ENCODE measurements at regions of chr21 and their contacts with region 1.

Region 1: GRCh38 chr21:41879190-41879998 is at the start of gene PRDM15:
- DNase-seq: peak; percentile 92
- ATAC-seq: peak; percentile 79
- H3K4me3 Mint-ChIP-seq: peak within 1 kb of the TSS; percentile 79
- H3K27ac Mint-ChIP-seq: peak within 1 kb of the TSS; percentile 97
- H3K4me1 Mint-ChIP-seq: peaks cover 18% of the 10 kb centered on the region
- H3K27me3 Mint-ChIP-seq: no peaks in the 10 kb centered on the region
- total RNA-seq, gene PRDM15: 11.8 to 13.0 TPM

Region 2: GRCh38 chr21:41361786-41362604 is 517.4 kb before region 1 on chr21 and contains the start of gene MX2:
- CTCF ChIA-PET with region 1: no interaction called
- POLR2A ChIA-PET with region 1: no interaction called
- intact Hi-C with region 1: loop called in 1 of 2 experiments (anchors 5 kb)
- DNase-seq: peak; percentile 87
- ATAC-seq: peak; percentile 79
- H3K4me3 Mint-ChIP-seq: peak within 1 kb of the TSS; percentile 77
- H3K27ac Mint-ChIP-seq: peak within 1 kb of the TSS; percentile 97
- H3K4me1 Mint-ChIP-seq: peaks cover 56% of the 10 kb centered on the region
- H3K27me3 Mint-ChIP-seq: no peaks in the 10 kb centered on the region
- total RNA-seq, gene MX2: 30.7 to 40.4 TPM

Region 3: DNA sequence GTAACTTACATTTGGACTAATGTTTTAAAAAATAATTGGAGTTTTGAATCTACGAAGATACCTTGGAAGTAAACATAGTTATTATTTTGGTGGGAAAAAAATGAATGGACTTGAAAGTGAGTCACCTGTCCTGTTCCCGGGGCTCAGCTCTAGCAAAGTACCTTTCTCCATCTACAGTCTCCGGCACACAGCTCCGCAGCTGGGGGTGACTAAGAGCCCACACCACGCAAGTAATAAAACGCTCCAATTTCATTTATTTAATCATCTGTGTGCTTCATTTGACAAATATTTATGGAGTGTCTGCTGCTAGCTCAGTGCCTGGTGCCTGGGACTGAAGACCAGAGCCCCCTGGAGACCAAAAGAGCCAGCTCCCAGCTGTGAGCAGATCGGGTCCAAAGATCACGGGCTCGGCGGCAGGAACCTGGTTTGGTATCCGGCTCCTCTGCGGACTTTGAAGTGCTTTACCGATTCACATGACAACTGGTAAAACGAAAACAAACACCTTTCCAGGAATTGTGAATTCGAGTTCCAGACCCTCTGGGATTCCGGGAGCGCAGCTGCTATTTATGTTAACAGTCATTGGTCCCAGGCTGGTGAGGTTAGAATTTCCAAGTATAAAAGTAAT is 110.8 kb before region 1 on chr21:
- CTCF ChIA-PET with region 1: no interaction called
- POLR2A ChIA-PET with region 1: no interaction called
- intact Hi-C with region 1: loop called in 1 of 2 experiments (anchors 5 kb)
- DNase-seq: peak; percentile 46
- ATAC-seq: peak; percentile 62
- H3K4me3 Mint-ChIP-seq: peak overlapping the region; percentile 66
- H3K27ac Mint-ChIP-seq: no peak overlapping the region
- H3K4me1 Mint-ChIP-seq: peaks cover 25% of the 10 kb centered on the region
- H3K27me3 Mint-ChIP-seq: peaks cover 52% of the 10 kb centered on the region

Region 4: DNA sequence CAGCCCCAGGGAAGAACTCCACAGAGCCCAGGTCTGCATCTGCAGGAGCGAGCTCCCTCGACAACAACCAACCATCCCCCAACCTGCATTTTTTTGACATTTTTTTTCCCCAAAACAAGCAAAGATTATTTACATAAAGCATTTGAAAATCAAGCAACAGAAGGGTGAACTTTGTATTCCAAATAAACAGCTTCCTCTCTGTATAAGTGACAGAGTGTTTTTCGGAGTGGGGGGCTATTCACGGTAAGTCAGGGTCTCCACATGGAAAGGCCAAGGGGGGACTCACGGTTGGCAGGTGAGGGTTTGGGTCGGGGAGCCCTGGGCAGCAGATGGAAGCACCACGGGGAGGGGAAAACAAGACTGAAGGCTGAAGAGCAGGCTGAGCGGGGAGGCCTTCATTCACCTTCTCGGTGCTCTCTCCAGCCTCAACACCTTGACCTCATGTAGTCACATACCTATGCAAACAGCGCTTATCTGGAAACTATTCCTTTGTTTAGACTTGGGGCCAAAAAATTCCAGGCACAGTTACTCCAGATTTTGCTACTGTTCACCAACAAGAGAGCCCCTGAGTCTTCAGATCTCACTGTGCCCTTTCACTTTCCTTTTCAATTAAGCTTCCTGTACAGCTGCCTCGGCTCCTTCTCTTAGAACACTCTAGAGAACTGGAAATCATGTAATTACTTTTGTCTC is 46.9 kb after region 1 on chr21:
- CTCF ChIA-PET with region 1: interaction called, 3 read pairs
- POLR2A ChIA-PET with region 1: interaction called, 9 read pairs
- intact Hi-C with region 1: loop called (anchors 1 kb)
- DNase-seq: peak; percentile 35
- ATAC-seq: peak; percentile 82
- H3K4me3 Mint-ChIP-seq: peak overlapping the region; percentile 86
- H3K27ac Mint-ChIP-seq: peak overlapping the region; percentile 99
- H3K4me1 Mint-ChIP-seq: peaks cover 59% of the 10 kb centered on the region
- H3K27me3 Mint-ChIP-seq: no peaks in the 10 kb centered on the region

Region 5: GRCh38 chr21:42107881-42108553 is 228.6 kb after region 1 on chr21:
- CTCF ChIA-PET with region 1: interaction called, 20 read pairs
- POLR2A ChIA-PET with region 1: interaction called, 4 read pairs
- intact Hi-C with region 1: loop called in 1 of 2 experiments (anchors 1 kb)
- DNase-seq: peak; percentile 83
- ATAC-seq: peak; percentile 99
- H3K4me3 Mint-ChIP-seq: peak overlapping the region; percentile 4
- H3K27ac Mint-ChIP-seq: no peak overlapping the region
- H3K4me1 Mint-ChIP-seq: peaks cover 11% of the 10 kb centered on the region
- H3K27me3 Mint-ChIP-seq: no peaks in the 10 kb centered on the region

Measured in activated CD4-positive, alpha-beta T cell treated with anti-CD3 and anti-CD28 coated beads for 36 hours (primary cell).